PC-3 (cell line): ENCODE measurements at regions of chr6 and their contacts with region 1.

Region 1: DNA sequence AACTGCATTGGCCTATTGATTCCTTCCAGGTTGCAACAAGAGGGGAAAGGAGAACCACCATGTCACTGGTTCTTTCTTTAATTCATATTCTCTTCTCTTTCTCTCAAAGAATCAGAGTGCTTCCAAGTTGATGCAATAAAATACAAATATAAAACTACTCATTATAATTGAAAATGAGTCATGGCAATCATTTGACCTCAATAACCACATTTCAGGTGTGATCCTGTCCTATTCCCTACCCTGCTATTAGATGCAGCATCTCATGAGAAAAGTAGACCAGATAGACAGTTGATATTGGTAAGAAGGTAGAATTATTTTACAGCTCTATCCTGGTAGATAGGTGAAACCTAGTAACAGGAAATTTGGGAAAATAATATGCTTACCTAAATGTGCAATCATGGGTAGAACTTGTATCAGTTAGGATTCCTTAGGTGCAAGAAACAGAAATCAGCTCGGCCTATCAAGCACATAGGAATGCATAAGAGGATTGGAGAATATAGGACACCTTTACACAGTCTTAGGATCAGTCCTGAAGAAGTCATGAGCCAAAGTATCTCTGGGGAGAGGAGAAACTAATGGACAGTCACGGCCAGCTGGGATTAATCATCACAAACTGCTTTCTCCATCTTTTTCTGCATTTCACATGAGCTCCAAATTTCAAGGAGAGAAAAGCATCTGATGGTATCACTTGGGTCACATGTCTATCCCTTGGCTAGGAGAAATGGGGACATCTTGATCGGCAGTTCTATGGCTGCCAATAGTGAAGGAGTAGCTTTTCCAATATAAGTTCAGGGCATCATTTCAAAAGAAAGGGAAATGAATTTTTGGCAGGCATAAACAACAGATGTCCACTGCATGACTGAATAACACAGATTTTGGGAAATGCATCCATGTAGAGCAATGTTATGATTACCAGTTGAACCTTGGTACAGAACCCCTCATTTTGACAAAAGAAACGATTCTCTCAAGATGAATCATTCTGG is 19.3 kb upstream of the RNF146 start:
- DNase-seq: no peak
- ATAC-seq: peak; percentile 78
- H3K4me3 ChIP-seq: no peak overlapping the region
- H3K27ac ChIP-seq: no peak overlapping the region
- H3K4me1 ChIP-seq: no peaks in the 10 kb centered on the region; the same call in 1 of the 2 replicates
- H3K27me3 ChIP-seq: no peaks in the 10 kb centered on the region
- CTCF ChIP-seq: no peak

Region 2: GRCh38 chr6:127186889-127187288 is 60.5 kb before region 1 on chr6:
- CTCF ChIA-PET with region 1: no interaction called
- POLR2A ChIA-PET with region 1: no interaction called
- intact Hi-C with region 1: no loop called
- DNase-seq: peak; percentile 54
- ATAC-seq: peak; percentile 46; the same call in 1 of the 2 replicates
- H3K4me3 ChIP-seq: no peak overlapping the region
- H3K27ac ChIP-seq: no peak overlapping the region
- H3K4me1 ChIP-seq: no peaks in the 10 kb centered on the region
- H3K27me3 ChIP-seq: peaks cover 13% of the 10 kb centered on the region; the same call in 1 of the 2 replicates
- CTCF ChIP-seq: peak; percentile 62

Region 3: GRCh38 chr6:127201321-127201720 is 46.1 kb before region 1 on chr6:
- CTCF ChIA-PET with region 1: no interaction called
- POLR2A ChIA-PET with region 1: no interaction called
- intact Hi-C with region 1: loop called (anchors 2 kb)
- DNase-seq: peak; percentile 46
- ATAC-seq: peak; percentile 85
- H3K4me3 ChIP-seq: no peak overlapping the region
- H3K27ac ChIP-seq: no peak overlapping the region
- H3K4me1 ChIP-seq: no peaks in the 10 kb centered on the region; the same call in 1 of the 2 replicates
- H3K27me3 ChIP-seq: no peaks in the 10 kb centered on the region
- CTCF ChIP-seq: no peak

Region 4: GRCh38 chr6:127366281-127367022 is 119.0 kb after region 1 on chr6:
- CTCF ChIA-PET with region 1: no interaction called
- POLR2A ChIA-PET with region 1: no interaction called
- intact Hi-C with region 1: no loop called
- DNase-seq: peak; percentile 91
- ATAC-seq: peak; percentile 98
- H3K4me3 ChIP-seq: no peak overlapping the region
- H3K27ac ChIP-seq: peak overlapping the region; percentile 59
- H3K4me1 ChIP-seq: peaks cover 17% of the 10 kb centered on the region
- H3K27me3 ChIP-seq: no peaks in the 10 kb centered on the region
- CTCF ChIP-seq: no peak

Region 5: GRCh38 chr6:127606131-127606562 is 358.7 kb after region 1 on chr6:
- CTCF ChIA-PET with region 1: no interaction called
- POLR2A ChIA-PET with region 1: no interaction called
- intact Hi-C with region 1: no loop called
- DNase-seq: peak; percentile 61
- ATAC-seq: peak; percentile 65
- H3K4me3 ChIP-seq: no peak overlapping the region
- H3K27ac ChIP-seq: no peak overlapping the region
- H3K4me1 ChIP-seq: peaks cover 7% of the 10 kb centered on the region
- H3K27me3 ChIP-seq: no peaks in the 10 kb centered on the region
- CTCF ChIP-seq: peak; percentile 64